AG04449 (cell line): ENCODE measurements at regions of chr7 and their contacts with region 1.

Region 1: DNA sequence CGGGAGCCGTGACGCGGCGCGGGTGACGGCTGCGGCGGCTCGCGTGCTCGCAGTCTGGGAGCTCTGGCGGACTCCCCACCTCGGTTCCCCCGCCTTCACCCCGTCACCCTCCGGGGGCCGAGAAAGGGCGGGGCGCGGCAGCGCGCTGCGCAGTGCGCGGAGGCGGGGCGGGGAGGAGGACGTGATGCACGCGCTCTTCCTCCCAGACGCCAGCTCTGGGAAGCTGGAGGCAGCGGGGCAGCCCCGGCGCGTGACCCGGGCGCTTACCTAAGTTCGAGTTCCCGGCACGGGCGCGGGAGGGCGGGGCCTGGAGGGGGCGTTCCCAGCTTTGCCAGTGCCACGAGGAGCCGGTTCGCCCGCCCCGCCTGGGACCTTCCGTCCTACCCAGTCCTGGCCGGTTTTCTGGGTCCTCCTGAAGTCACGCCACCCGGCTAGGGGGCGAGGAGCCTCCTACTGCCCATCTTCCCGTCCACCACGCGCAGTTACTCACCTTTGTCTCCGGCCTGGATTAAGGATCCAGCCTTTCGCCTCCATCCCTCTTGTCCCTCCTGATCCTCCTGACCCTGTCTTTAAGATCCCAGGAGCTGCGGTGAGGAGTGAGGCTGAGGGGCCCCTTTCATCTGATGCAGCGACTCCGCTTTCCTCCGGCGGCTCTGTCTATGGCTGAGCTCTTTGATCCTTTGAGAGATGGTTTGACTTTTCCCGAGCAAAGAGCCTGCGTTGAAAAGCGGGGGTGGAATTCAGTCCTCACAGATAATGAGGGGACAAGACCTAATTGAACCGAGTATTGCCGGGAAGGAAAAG is 470 bp upstream of the NAMPT start:
- DNase-seq: peak; percentile 82
- H3K4me3 ChIP-seq: peak overlapping the region; percentile 82
- CTCF ChIP-seq: no peak

Region 2: GRCh38 chr7:106270122-106270977 is 14.9 kb before region 1 on chr7:
- CTCF ChIA-PET with region 1: interaction called, 4 read pairs
- POLR2A ChIA-PET with region 1: interaction called, 11 read pairs
- DNase-seq: no peak
- H3K4me3 ChIP-seq: no peak overlapping the region
- CTCF ChIP-seq: no peak

Region 3: DNA sequence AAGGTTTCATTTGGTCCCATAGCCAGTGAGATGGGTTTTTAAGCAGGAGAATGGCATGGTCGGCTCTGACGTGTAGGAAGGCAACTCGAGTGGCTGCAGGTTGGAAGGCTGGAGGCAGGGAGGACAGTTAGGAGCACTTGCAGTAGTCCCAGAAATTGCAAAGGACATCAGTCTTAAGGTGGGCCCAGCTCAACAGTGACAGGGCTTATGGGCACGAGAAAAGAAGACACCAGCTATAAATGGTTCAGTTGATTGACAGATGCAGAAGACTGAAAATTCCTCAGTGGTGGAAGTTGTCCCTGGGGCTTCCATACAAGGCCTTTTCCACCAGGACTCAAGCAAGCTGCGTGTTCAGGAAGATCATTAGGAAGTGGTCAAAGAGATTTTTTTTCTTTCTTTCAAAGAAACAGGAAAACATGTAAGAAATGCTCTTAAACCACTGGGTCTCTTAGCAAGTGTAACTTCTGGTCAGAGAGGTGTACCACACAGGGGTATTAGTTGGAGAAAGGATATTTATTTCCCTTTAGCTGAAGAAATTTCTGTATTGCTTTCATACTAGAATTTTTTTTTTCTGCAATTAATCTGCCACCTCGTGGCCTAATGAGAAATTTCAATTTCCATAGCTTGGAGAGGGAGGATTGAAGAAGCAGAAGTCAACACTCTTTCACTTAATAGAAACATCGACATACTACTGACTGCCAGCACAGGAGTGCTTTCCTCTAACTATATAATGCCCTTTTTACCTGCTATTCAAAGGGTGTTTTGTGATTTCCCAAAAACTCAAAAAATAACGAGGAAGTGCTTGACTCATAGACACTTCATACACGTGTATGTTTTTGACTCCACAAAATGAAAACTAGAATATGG is 177.0 kb after region 1 on chr7:
- CTCF ChIA-PET with region 1: interaction called, 17 read pairs
- POLR2A ChIA-PET with region 1: no interaction called
- DNase-seq: no peak
- H3K4me3 ChIP-seq: no peak overlapping the region
- CTCF ChIP-seq: peak; percentile 7